Activated CD4-positive, alpha-beta memory T cell treated with anti-CD3 and anti-CD28 coated beads for 36 hours (primary cell): ENCODE measurements at regions of chr3 and their contacts with region 1.

Region 1: DNA sequence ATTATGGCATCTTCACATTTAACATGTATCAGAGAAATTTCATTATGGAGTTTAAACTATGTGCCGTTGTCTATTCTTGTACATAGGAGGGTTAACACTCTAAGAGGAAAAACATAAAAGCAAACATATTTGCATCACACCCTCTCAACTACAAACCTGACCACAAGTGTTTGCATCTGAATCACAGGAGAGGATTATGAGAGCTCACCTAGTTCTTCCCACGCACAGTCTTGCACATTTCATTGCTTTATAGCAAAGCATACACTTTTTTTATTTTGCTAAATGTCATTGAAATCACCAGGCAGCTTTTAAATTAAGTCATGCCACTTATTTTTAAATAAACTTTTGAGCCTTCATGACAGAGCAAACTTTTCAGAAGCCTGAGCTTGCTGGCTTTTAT is 12.5 kb downstream of the TRAT1 start:
- DNase-seq: peak; percentile 49
- H3K4me3 Mint-ChIP-seq: peak overlapping the region; percentile 77
- H3K27ac Mint-ChIP-seq: peak overlapping the region; percentile 93
- H3K4me1 Mint-ChIP-seq: peaks cover 79% of the 10 kb centered on the region
- H3K27me3 Mint-ChIP-seq: no peaks in the 10 kb centered on the region

Region 2: GRCh38 chr3:107522510-107523288 is 1312.4 kb before region 1 on chr3 and contains the start of gene BBX:
- CTCF ChIA-PET with region 1: no interaction called
- POLR2A ChIA-PET with region 1: no interaction called
- intact Hi-C with region 1: loop called (anchors 5 kb)
- DNase-seq: peak; percentile 96
- H3K4me3 Mint-ChIP-seq: peak within 1 kb of the TSS; percentile 94
- H3K27ac Mint-ChIP-seq: peak within 1 kb of the TSS; percentile 95
- H3K4me1 Mint-ChIP-seq: peaks cover 23% of the 10 kb centered on the region
- H3K27me3 Mint-ChIP-seq: no peaks in the 10 kb centered on the region
- total RNA-seq, gene BBX: 39.9 to 40.9 TPM

Region 3: DNA sequence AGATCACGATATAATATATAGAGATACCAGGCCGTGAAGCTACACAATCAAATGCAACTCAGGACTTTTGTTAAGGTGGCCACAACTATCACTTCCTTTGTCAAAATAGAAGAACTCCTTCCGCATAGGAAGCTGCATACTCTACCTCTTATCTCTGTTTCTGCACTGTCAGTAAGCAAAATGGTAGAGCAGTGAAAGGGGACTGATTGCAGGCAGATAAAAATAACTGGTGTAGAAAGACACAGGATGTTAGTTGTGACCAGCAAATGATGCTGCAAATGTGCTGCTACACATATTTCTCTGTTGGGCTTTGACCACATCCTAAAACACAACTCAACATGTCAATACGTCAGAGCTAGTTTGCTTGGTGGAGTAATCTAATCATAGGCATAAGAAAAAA is 28.8 kb before region 1 on chr3:
- CTCF ChIA-PET with region 1: no interaction called
- POLR2A ChIA-PET with region 1: no interaction called
- intact Hi-C with region 1: loop called (anchors 1 kb)
- DNase-seq: peak; percentile 25
- H3K4me3 Mint-ChIP-seq: peak overlapping the region; percentile 20
- H3K27ac Mint-ChIP-seq: peak overlapping the region; percentile 83
- H3K4me1 Mint-ChIP-seq: peaks cover 14% of the 10 kb centered on the region
- H3K27me3 Mint-ChIP-seq: no peaks in the 10 kb centered on the region

Region 4: DNA sequence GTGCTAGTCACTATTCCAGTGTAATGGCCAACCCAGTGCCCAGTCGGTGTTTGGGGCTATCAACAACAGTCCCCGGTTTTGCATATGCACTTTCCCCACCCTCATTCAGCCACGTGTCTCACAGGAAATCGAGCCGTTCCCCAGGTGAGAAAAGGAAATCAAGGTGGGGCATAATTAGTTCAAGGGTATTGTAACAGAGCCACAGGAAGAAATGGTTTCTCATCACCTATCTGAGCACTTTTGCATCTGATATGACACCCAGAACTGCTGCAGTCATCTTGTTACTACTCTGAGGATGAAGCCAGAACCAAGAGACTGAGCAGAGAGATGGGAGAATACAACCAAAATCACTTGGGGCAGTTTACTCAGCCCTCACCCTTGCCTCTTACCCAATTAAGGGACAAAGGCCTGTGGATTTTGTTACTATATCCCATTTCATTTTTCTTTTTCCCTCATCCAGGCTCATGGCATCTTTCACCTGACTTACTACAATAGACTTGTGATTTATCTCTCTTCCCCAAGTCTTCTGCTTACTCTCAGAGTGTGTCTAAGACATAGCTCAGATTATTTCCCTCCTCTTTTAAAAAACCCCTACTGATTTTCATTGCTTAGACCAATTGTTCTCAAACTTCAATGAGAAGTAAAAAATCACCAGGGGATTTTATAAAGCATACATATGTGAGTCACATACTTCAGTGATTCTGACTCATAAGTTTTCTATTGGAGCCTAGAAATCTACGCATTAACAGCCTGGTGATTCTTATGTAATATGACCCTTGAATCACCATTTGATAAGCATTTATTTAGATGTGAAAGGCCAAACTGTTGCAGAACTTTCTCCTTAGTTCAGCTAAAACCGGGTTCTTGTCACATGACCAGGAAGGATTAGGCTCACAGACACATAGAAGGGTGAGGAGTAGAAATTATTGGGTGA is 28.0 kb after region 1 on chr3:
- CTCF ChIA-PET with region 1: interaction called, 5 read pairs
- POLR2A ChIA-PET with region 1: interaction called, 14 read pairs
- intact Hi-C with region 1: loop called (anchors 1 kb)
- DNase-seq: peak; percentile 61
- H3K4me3 Mint-ChIP-seq: peak overlapping the region; percentile 48
- H3K27ac Mint-ChIP-seq: peak overlapping the region; percentile 99
- H3K4me1 Mint-ChIP-seq: peaks cover 46% of the 10 kb centered on the region
- H3K27me3 Mint-ChIP-seq: no peaks in the 10 kb centered on the region

Region 5: GRCh38 chr3:108914774-108915641 is 79.9 kb after region 1 on chr3:
- CTCF ChIA-PET with region 1: interaction called, 14 read pairs
- POLR2A ChIA-PET with region 1: no interaction called
- intact Hi-C with region 1: no loop called
- DNase-seq: peak; percentile 73
- H3K4me3 Mint-ChIP-seq: peak overlapping the region; percentile 27
- H3K27ac Mint-ChIP-seq: no peak overlapping the region
- H3K4me1 Mint-ChIP-seq: peaks cover 11% of the 10 kb centered on the region
- H3K27me3 Mint-ChIP-seq: no peaks in the 10 kb centered on the region

Region 6: DNA sequence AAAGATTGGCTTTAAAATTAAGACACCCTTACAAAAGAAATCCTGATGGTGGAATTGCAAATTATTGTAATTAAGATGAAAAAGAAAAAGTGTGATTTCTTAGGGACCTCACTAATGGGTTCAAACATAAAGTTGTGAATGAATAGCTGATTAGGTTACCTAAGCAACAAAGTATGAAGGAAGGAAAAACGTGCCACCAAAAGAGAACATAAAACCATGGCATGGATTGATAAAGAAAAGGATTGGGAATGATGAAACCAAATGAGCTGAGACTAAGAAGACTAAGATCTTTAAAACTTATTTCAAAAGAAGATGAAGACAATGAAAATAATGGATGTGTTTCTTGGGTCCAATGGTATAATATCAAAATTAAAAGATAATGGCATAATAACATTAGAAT is 150.7 kb after region 1 on chr3:
- CTCF ChIA-PET with region 1: no interaction called
- POLR2A ChIA-PET with region 1: no interaction called
- intact Hi-C with region 1: no loop called
- DNase-seq: no peak
- H3K4me3 Mint-ChIP-seq: no peak overlapping the region
- H3K27ac Mint-ChIP-seq: no peak overlapping the region
- H3K4me1 Mint-ChIP-seq: no peaks in the 10 kb centered on the region
- H3K27me3 Mint-ChIP-seq: peaks cover 9% of the 10 kb centered on the region